Gastrocnemius medialis (tissue), 4 donors: ENCODE measurements at regions of chr3 and their contacts with region 1.

Region 1: GRCh38 chr3:72447059-72447946 is 400.9 kb downstream of the SHQ1 start:
- DNase-seq: peak; percentile 82 to 87
- ATAC-seq: peak; percentile 91 to 92
- H3K4me3 ChIP-seq: peak overlapping the region; percentile 74 to 89 (median 79)
- H3K27ac ChIP-seq: peak overlapping the region; percentile 83 to 92 (median 91)
- H3K4me1 ChIP-seq: peaks cover 21 to 23% of the 10 kb centered on the region in 2 donors
- H3K27me3 ChIP-seq: no peaks in the 10 kb centered on the region
- CTCF ChIP-seq: peak in 1 of 5 experiments; percentile 7
- POLR2A ChIP-seq: peak; percentile 50 to 53

Region 2: DNA sequence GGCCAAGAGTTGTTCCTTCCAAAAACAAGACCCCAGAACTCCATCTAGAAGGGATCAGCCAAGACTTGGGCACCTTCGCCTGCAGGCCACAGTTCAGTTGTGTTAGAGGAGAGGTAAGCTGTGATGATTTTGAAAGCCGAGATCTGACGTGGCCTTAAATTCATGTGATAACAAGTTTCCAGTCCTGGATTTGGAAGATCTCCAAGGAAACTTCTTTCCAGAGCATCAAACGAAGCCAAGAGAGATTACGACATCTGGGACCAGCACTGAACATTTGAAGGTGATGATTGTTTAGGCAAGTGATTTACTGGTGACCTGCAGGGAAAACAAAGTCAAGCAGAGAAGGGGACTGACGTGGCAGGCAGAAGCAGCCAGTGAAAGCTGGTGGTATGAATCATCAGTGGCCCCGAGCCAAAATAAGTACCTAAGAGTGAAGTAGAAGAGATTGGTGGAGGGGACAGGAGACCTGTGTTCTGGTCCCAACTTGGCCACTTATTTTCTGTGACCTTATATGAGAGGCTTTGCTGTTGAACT is 323.3 kb before region 1 on chr3:
- in situ Hi-C with region 1: no loop called
- intact Hi-C with region 1: loop called (anchors 5 kb)
- DNase-seq: peak; percentile 91 to 94
- ATAC-seq: peak; percentile 98 to 99
- H3K4me3 ChIP-seq: no peak overlapping the region
- H3K27ac ChIP-seq: peak overlapping the region; percentile 60 to 75 (median 67)
- H3K4me1 ChIP-seq: peaks cover 9 to 17% of the 10 kb centered on the region in 2 donors
- H3K27me3 ChIP-seq: no peaks in the 10 kb centered on the region
- CTCF ChIP-seq: no peak
- POLR2A ChIP-seq: peak in 1 of 2 donors; percentile 51

Region 3: GRCh38 chr3:72152551-72153476 is 294.5 kb before region 1 on chr3:
- in situ Hi-C with region 1: no loop called
- intact Hi-C with region 1: no loop called
- DNase-seq: peak; percentile 32 to 61
- ATAC-seq: peak; percentile 60 to 68
- H3K4me3 ChIP-seq: peak overlapping the region; percentile 31 to 48 (median 41)
- H3K27ac ChIP-seq: peak overlapping the region; percentile 2 to 27 (median 10)
- H3K4me1 ChIP-seq: peaks cover 0 to 9% of the 10 kb centered on the region in 2 donors
- H3K27me3 ChIP-seq: no peaks in the 10 kb centered on the region
- CTCF ChIP-seq: no peak
- POLR2A ChIP-seq: no peak

Region 4: GRCh38 chr3:72270072-72270681 is 177.1 kb before region 1 on chr3:
- in situ Hi-C with region 1: no loop called
- intact Hi-C with region 1: loop called (anchors 5 kb)
- DNase-seq: peak; percentile 83 to 89
- ATAC-seq: peak; percentile 95 to 97
- H3K4me3 ChIP-seq: no peak overlapping the region
- H3K27ac ChIP-seq: peak overlapping the region; percentile 27 to 59 (median 54)
- H3K4me1 ChIP-seq: peaks cover 24 to 35% of the 10 kb centered on the region in 2 donors
- H3K27me3 ChIP-seq: no peaks in the 10 kb centered on the region
- CTCF ChIP-seq: no peak
- POLR2A ChIP-seq: no peak

Region 5: GRCh38 chr3:72380193-72380592 is 67.1 kb before region 1 on chr3:
- in situ Hi-C with region 1: no loop called
- intact Hi-C with region 1: loop called (anchors 5 kb)
- DNase-seq: no peak
- ATAC-seq: peak; percentile 50 to 65
- H3K4me3 ChIP-seq: no peak overlapping the region
- H3K27ac ChIP-seq: no peak overlapping the region
- H3K4me1 ChIP-seq: peaks cover 21 to 61% of the 10 kb centered on the region in 2 donors
- H3K27me3 ChIP-seq: no peaks in the 10 kb centered on the region
- CTCF ChIP-seq: no peak
- POLR2A ChIP-seq: no peak

Region 6: DNA sequence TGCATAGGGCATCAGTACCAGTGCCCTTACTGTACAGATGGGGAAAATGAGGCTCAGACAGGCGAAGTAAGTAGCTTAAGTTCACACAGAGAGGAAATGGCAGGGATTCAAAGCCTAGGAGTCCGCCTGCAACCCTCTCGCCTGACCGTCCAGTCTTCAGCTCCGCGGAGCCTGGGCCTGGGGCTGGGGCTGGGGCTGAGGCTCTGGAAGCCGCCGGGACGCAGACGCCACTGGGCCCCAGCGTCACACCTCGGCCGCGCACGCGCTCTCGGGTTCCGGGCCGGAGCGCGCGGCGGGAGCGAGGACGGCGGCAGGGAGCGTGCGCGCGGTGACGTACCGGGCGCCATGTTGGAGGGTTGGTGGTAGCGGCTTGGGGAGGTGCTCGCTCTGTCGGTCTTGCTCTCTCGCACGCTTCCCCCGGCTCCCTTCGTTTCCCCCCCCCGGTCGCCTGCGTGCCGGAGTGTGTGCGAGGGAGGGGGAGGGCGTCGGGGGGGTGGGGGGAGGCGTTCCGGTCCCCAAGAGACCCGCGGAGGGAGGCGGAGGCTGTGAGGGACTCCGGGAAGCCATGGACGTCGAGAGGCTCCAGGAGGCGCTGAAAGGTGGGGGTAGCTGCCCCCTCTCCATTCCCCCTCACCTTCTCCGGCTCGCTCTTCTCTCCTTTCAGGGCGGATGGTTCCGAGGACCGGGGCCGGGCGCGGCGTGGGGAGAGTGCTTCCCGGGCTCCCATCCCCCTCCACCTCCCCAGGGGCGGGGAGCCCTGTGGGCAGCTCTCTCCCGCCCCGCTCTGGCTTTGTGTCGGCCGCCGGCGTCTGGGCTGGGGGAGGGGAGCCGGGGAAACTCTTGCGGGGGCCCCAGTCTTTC is 549.4 kb after region 1 on chr3 and contains the start of gene PPP4R2:
- in situ Hi-C with region 1: no loop called
- intact Hi-C with region 1: loop called (anchors 10 kb)
- DNase-seq: peak; percentile 71 to 81
- ATAC-seq: peak; percentile 90
- H3K4me3 ChIP-seq: peak within 1 kb of the TSS; percentile 91 to 94 (median 93)
- H3K27ac ChIP-seq: peak within 1 kb of the TSS; percentile 90 to 99 (median 98)
- H3K4me1 ChIP-seq: peaks cover 38 to 45% of the 10 kb centered on the region in 2 donors
- H3K27me3 ChIP-seq: no peaks in the 10 kb centered on the region
- CTCF ChIP-seq: no peak
- POLR2A ChIP-seq: peak; percentile 86 to 88
- total RNA-seq, gene PPP4R2: 31.0 to 60.5 (median 47.0) TPM